ENCODE measurements at regions of chr10 and their contacts with region 1.

Region 1: DNA sequence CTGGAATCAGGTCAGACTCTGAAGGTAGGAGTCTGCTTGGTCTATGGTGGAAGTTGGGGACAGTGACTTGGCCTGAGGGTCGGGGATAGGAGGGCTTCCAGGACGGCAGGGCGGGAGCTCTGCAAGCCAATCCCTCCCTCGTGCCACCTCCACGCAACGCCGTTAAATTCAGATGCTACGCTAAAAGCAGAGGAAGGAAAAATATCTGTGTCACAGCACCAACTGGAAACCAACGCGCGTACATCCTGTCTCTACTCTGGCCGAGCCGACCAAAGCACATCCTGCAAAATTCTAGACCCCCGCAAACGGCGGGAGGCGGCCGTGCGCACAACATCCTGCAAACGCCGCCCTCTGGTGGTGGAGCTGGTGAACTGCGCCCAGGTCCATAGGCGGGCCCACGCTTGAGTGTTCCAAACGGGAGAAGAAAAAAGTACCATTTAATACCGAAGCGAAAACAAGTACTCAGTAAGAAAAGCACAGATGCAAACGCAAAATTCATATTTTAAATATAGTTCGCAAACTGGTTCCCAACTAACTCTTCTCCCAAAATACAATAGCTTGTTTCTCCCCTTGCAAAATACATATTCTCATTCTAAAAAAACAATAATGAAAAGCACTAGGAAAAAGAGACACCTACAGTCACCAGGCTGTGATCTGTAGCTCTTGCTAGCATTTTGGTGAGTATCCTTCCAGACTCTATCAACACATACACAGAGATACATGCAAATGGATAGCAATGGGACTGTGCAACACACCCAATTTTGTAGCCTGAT is 45.7 kb upstream of the HSPA12A start:
- DNase-seq: peak; percentile 41
- ATAC-seq: peak; percentile 90
- H3K4me3 ChIP-seq: peak overlapping the region in 1 of 3 experiments; percentile 49; a peak in 1 of 6 replicates
- H3K27ac ChIP-seq: no peak overlapping the region
- H3K4me1 ChIP-seq: peaks cover 22% of the 10 kb centered on the region
- H3K27me3 ChIP-seq: peaks cover 0 to 7% of the 10 kb centered on the region in 2 experiments; a peak in 3 of 5 replicates
- CTCF ChIP-seq: peak; percentile 92
- EP300 ChIP-seq: no peak
- POLR2A ChIP-seq: no peak
- RAD21 ChIP-seq: peak; percentile 86

Region 2: DNA sequence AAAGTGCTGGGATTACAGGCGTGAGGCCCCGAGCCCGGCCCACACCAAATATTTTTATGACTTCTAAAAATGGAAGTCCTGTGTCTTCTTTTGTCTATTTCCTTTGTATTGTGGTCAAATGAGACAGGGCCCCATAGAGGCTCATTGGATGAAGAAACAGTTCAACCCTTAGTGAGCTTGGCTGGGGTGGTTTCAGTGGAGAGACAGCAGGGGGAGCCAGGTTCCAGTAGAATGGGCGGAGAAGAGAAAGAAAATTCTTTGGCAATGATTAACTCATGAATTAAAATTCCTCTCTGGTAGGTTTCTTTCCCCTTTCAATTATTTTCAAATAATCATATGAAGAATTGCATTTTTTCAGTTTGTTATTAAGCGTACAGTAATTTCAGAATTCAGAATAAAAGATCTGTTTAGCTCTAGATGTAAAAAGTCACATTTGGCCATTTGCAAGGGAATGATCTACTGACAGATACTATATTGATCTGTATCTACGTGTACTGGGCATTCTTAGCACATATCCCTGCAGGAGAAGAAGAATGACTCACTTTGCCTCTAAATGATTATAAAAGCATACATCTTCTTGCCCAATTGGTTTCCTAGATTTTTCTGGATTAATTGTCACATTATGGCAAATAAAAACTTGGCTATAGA is 317.2 kb before region 1 on chr10:
- CTCF ChIA-PET with region 1: no interaction called
- POLR2A ChIA-PET with region 1: no interaction called
- in situ Hi-C with region 1: no loop called
- intact Hi-C with region 1: loop called (anchors 5 kb)
- DNase-seq: peak; percentile 20
- ATAC-seq: peak; percentile 92
- H3K4me3 ChIP-seq: no peak overlapping the region
- H3K27ac ChIP-seq: no peak overlapping the region
- H3K4me1 ChIP-seq: no peaks in the 10 kb centered on the region
- H3K27me3 ChIP-seq: no peaks in the 10 kb centered on the region
- CTCF ChIP-seq: peak; percentile 43
- EP300 ChIP-seq: no peak
- POLR2A ChIP-seq: no peak
- RAD21 ChIP-seq: no peak

Region 3: DNA sequence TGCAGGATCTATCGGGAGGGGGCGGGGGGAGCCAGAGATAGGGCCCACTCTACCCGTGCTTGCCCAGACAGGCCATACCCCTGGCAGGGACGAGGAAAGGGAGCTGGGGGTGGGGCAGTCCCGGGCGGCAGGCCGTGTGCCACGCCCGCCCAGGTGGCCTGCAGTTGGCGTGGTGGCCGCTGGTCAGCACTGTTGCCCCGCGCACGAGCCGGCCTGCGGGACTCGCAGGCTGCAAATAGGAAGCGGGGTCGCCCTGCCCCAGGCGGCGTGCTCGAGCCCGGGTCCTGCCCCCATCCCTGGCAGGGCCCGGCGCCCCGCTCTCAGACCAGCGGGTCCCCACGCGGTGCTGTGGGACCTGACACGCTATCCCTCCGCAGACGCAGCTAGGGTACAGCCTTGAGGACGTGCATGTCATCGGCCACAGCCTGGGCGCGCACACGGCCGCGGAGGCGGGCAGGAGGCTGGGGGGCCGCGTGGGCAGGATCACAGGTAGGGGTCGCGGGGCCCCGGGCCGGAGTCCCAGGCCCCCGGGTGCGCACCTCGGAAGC is 160.6 kb before region 1 on chr10:
- CTCF ChIA-PET with region 1: interaction called, 9 read pairs
- POLR2A ChIA-PET with region 1: no interaction called
- in situ Hi-C with region 1: no loop called
- intact Hi-C with region 1: loop called (anchors 1 kb)
- DNase-seq: peak; percentile 7
- ATAC-seq: peak; percentile 96
- H3K4me3 ChIP-seq: peak overlapping the region in 2 of 3 experiments; percentile 20 to 28; a peak in 2 of 6 replicates
- H3K27ac ChIP-seq: no peak overlapping the region
- H3K4me1 ChIP-seq: no peaks in the 10 kb centered on the region
- H3K27me3 ChIP-seq: no peaks in the 10 kb centered on the region
- CTCF ChIP-seq: peak; percentile 84
- EP300 ChIP-seq: no peak
- POLR2A ChIP-seq: no peak
- RAD21 ChIP-seq: peak; percentile 77

Region 4: GRCh38 chr10:116683821-116684220 is 104.3 kb before region 1 on chr10:
- CTCF ChIA-PET with region 1: interaction called, 33 read pairs
- POLR2A ChIA-PET with region 1: no interaction called
- in situ Hi-C with region 1: loop called (anchors 5 kb)
- intact Hi-C with region 1: loop called (anchors 1 kb)
- DNase-seq: no peak
- ATAC-seq: no peak
- H3K4me3 ChIP-seq: no peak overlapping the region
- H3K27ac ChIP-seq: no peak overlapping the region
- H3K4me1 ChIP-seq: 0 out of 2 replicates have a peak, but pooled peaks cover 6% of the 10 kb centered on the region
- H3K27me3 ChIP-seq: no peaks in the 10 kb centered on the region
- CTCF ChIP-seq: no peak
- EP300 ChIP-seq: no peak
- POLR2A ChIP-seq: no peak
- RAD21 ChIP-seq: no peak

Region 5: DNA sequence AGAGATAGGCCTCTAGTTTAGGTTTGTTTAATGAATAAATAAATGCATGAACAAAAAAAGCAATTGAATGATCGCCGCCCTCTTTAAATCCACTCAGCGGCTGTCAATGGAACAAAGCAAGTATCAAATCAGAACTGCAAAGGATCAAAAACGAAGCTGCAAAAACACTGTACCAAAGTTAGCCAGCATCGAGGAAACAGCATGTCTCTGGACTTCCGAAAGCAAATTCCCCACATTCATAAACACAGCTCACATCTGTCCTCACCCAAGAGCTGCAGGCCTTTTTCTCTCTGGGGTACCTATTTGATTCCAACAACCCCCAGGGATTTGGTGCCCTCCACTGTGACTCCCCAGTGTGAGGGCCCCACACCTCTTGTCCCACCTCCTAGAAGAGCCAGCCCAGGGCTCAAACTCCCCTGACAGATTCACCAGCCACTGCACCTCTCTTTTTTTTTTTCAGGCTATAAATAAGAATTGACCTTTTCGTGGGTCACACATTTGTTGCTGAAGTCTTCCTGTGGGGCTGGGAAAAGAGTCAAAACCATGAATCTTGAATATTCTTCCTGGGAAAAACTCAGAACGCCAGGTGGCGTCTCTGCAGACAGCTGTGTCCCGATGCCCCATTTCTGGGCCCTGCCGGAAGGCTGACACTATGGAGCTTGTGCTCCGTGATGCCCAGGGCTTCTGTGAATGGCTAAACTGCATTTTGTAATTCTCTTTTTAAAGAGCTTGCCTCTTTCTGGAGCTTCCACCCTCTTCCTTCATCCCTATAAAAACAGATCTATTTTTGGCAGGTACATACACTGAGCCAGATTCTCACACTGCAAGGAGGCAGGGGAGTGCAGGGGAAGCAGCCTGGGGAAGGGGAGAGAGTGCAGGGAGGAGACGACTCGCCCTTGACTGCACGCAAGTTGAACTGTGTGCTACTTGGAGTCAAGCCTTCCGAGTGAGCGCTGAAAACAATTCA is 97.4 kb before region 1 on chr10:
- CTCF ChIA-PET with region 1: interaction called, 12 read pairs
- POLR2A ChIA-PET with region 1: no interaction called
- in situ Hi-C with region 1: loop called (anchors 5 kb)
- intact Hi-C with region 1: no loop called
- DNase-seq: no peak
- ATAC-seq: peak; percentile 22; the same call in 1 of the 3 replicates
- H3K4me3 ChIP-seq: no peak overlapping the region
- H3K27ac ChIP-seq: no peak overlapping the region
- H3K4me1 ChIP-seq: peaks cover 23% of the 10 kb centered on the region
- H3K27me3 ChIP-seq: no peaks in the 10 kb centered on the region
- CTCF ChIP-seq: peak; percentile 40; the same call in 1 of the 2 replicates
- EP300 ChIP-seq: no peak
- POLR2A ChIP-seq: no peak
- RAD21 ChIP-seq: 0 out of 2 replicates have a peak, but pooled peaks have one; percentile 41

Region 6: DNA sequence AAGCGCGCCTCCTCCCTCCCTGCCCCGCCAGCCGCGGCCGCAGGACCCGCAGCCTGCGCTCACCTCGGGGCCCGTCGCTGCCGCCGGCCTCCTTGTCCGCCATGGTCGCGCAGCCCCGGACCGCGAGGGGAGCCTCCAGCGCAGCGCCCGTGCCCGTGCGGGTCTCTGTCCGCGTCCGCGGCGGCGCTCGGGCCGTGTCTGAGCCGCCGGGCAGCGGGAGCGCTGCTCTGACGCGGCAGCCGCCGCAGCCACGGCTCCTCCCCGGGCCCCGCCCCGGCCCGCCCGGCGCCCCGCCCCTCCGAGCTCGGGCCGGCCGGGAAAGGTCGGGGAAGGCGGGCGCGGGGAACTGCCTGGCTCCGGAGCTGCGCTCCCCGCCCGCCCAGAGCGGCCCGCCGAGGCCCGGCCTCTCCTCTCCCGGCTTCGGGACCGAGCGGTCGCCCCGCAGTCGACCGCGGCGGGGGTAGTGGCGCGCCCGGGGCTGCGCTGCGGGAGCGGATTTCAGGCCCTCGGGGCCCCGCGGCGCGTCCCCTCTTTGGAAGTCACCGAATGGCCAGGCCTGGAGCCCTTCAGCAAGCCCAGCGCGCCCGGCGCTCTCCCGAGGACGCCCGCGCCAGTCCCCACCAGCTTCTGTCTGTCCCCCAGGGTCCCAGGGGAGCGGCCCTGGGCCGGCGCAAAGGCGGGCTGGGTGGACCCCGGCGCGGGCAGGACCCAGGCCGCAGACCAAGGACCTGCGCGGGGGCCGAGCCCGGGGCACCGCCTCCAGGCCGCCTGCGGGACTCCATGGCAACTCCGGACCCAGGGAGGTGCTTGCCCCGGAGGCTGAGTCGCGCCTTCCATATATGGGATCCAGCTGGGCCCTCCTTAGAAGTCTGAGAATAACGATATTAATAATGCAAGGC is 45.5 kb before region 1 on chr10 and contains the start of gene HSPA12A:
- CTCF ChIA-PET with region 1: no interaction called
- POLR2A ChIA-PET with region 1: no interaction called
- in situ Hi-C with region 1: no loop called
- intact Hi-C with region 1: loop called (anchors 5 kb)
- DNase-seq: no peak
- ATAC-seq: peak; percentile 89
- H3K4me3 ChIP-seq: peak within 1 kb of the TSS; percentile 71 to 80 (median 74)
- H3K27ac ChIP-seq: peak within 1 kb of the TSS; percentile 44
- H3K4me1 ChIP-seq: peaks cover 49% of the 10 kb centered on the region
- H3K27me3 ChIP-seq: peaks cover 0 to 23% of the 10 kb centered on the region in 2 experiments; a peak in 3 of 5 replicates
- CTCF ChIP-seq: no peak
- EP300 ChIP-seq: no peak
- POLR2A ChIP-seq: peak in 1 of 2 experiments; percentile 84; a peak in 2 of 4 replicates
- RAD21 ChIP-seq: peak; percentile 27; the same call in 1 of the 2 replicates
- total RNA-seq, gene HSPA12A: 12.9 and 13.6 TPM in 2 replicates

Region 7: DNA sequence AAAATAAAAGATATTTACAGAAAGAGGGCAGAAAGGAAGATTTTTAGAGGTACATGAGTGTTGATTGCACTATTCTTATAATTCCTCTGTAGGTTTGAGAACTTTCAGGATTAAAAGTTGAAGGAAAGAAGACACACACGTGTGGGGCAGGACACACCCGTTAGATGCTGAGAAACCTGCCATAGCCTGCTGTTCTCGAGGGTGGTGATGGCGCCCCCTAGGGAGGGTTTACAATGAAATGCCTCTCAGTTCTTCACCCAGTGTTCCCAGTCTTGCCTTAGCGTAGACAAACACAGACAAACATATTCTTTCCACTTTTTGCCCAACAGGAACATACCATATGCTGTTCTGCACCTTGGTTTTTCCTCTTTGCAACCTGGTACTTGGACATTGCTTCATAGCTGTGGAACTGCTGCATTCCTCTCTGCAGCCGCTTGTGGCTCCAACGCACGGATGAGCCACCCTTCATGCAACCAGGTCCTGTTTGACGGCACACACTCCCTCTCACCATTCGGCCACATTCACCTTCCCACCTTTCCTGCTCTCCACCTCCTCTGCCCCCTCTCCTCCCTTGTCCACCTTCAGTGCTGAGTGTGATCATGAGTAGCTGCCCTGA is 22.4 kb before region 1 on chr10:
- CTCF ChIA-PET with region 1: no interaction called
- POLR2A ChIA-PET with region 1: no interaction called
- in situ Hi-C with region 1: no loop called
- intact Hi-C with region 1: no loop called
- DNase-seq: no peak
- ATAC-seq: peak; percentile 67
- H3K4me3 ChIP-seq: peak overlapping the region in 1 of 3 experiments; percentile 27; a peak in 1 of 6 replicates
- H3K27ac ChIP-seq: no peak overlapping the region
- H3K4me1 ChIP-seq: peaks cover 68% of the 10 kb centered on the region
- H3K27me3 ChIP-seq: peaks cover 0 to 2% of the 10 kb centered on the region in 2 experiments; a peak in 2 of 5 replicates
- CTCF ChIP-seq: peak; percentile 69
- EP300 ChIP-seq: no peak
- POLR2A ChIP-seq: no peak
- RAD21 ChIP-seq: no peak

Region 8: DNA sequence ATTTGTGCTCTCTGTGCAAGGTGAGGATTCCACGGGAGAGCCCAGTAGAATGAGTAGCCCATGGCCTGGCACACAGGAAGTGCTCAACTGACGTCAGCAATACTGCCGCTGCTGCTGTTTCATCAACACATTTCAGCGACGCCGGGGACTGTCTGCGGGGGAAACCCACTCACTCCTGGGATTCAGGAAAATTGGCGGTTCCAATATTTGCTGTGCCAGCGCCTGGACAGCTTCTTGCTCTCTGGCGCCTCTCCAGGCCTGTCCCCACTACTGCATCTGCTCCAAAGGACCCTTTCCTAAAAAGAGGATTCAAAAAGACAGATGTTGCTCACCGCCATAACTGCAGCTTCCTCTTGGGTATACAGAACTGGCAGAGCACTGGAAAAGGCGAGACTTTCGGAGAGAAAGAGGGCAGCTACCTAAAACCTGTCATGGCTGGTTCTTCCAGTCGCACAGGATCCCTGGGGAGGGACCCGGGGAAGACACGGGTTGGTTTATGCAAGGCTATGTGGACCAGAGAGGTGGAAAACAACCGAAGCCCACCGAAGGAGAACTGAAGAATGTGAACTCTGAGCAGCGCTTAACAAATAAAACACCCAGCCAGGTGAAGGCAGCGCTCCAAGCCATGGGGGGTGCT is 21.5 kb after region 1 on chr10:
- CTCF ChIA-PET with region 1: no interaction called
- POLR2A ChIA-PET with region 1: no interaction called
- in situ Hi-C with region 1: no loop called
- intact Hi-C with region 1: no loop called
- DNase-seq: peak; percentile 12
- ATAC-seq: peak; percentile 71
- H3K4me3 ChIP-seq: no peak overlapping the region
- H3K27ac ChIP-seq: no peak overlapping the region
- H3K4me1 ChIP-seq: peaks cover 6% of the 10 kb centered on the region
- H3K27me3 ChIP-seq: peaks cover 2 to 18% of the 10 kb centered on the region in 2 experiments; a peak in 4 of 5 replicates
- CTCF ChIP-seq: peak; percentile 28; the same call in 1 of the 2 replicates
- EP300 ChIP-seq: no peak
- POLR2A ChIP-seq: no peak
- RAD21 ChIP-seq: no peak

Measured in HepG2 (cell line).